HCT116 (cell line): ENCODE measurements at regions of chr16 and their contacts with region 1.

Region 1: DNA sequence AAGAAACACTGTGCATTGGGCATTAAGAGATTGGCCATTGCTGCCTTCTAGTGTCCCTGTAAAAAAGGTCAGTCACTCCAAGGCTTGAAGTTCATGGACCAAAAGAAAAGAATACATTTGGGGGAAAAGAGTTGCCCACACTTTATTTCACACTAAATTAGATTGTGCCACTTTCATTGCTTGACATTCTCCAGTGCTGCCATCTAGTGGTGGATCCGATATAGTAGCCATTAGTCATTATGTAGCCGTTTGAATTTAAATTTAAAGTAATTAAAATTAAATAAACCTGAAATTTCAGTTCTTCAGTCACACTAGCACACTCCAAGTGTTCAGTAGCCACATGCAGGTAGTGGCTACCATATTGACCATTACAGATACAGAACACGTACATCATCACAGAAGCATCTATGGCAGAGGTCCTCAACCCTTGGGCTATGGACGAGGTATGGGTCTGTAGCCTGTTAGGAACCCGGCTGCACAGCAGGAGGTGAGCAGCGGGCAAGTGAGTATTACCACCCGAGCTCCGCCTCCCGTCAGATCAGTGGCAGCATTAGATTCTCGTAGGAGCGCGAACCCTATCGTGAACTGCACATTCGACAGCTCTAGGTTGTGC is 21.9 kb upstream of the CDH5 start:
- DNase-seq: no peak
- ATAC-seq: peak; percentile 69
- H3K4me3 ChIP-seq: no peak overlapping the region
- H3K27ac ChIP-seq: no peak overlapping the region
- H3K4me1 ChIP-seq: peaks cover 3 to 11% of the 10 kb centered on the region in 2 experiments; a peak in 3 of 4 replicates
- H3K27me3 ChIP-seq: no peaks in the 10 kb centered on the region
- CTCF ChIP-seq: peak; percentile 54 to 81 (median 62); a peak in 5 of 6 replicates
- POLR2A ChIP-seq: no peak
- RAD21 ChIP-seq: peak; percentile 49

Region 2: DNA sequence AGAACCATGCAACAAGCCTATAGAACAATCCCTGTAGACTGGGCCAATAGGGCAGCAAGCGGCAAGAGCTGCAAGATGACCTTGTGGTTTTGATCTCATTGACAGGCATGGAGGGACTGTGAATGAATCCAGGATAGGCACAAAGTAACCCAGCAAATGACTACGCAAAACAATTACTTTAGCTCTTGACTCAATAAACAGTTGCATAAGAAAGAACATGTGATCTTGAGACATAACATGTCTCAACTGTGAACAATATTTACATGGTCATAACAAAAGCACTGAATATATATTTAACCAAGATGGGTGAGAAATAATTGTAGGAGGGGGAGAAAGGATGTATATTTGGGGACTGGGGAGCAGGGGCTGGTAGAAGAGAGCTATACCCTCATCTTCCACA is 291.9 kb before region 1 on chr16:
- CTCF ChIA-PET with region 1: no interaction called
- POLR2A ChIA-PET with region 1: no interaction called
- RAD21 ChIA-PET with region 1: no interaction called
- intact Hi-C with region 1: no loop called
- DNase-seq: no peak
- ATAC-seq: no peak
- H3K4me3 ChIP-seq: no peak overlapping the region
- H3K27ac ChIP-seq: no peak overlapping the region
- H3K4me1 ChIP-seq: no peaks in the 10 kb centered on the region
- H3K27me3 ChIP-seq: peaks cover 36% of the 10 kb centered on the region
- CTCF ChIP-seq: no peak
- POLR2A ChIP-seq: no peak
- RAD21 ChIP-seq: no peak

Region 3: GRCh38 chr16:66483689-66484481 is 139.2 kb after region 1 on chr16:
- CTCF ChIA-PET with region 1: interaction called, 3 read pairs
- POLR2A ChIA-PET with region 1: no interaction called
- RAD21 ChIA-PET with region 1: no interaction called
- intact Hi-C with region 1: loop called (anchors 5 kb)
- DNase-seq: peak; percentile 59
- ATAC-seq: peak; percentile 91
- H3K4me3 ChIP-seq: no peak overlapping the region
- H3K27ac ChIP-seq: no peak overlapping the region
- H3K4me1 ChIP-seq: peaks cover under 1 to 15% of the 10 kb centered on the region in 2 experiments; a peak in 3 of 4 replicates
- H3K27me3 ChIP-seq: no peaks in the 10 kb centered on the region
- CTCF ChIP-seq: peak; percentile 96 to 98 (median 97)
- POLR2A ChIP-seq: no peak
- RAD21 ChIP-seq: peak; percentile 98